HEK293T (cell line): ENCODE measurements at regions of chr19 and their contacts with region 1.

Region 1: DNA sequence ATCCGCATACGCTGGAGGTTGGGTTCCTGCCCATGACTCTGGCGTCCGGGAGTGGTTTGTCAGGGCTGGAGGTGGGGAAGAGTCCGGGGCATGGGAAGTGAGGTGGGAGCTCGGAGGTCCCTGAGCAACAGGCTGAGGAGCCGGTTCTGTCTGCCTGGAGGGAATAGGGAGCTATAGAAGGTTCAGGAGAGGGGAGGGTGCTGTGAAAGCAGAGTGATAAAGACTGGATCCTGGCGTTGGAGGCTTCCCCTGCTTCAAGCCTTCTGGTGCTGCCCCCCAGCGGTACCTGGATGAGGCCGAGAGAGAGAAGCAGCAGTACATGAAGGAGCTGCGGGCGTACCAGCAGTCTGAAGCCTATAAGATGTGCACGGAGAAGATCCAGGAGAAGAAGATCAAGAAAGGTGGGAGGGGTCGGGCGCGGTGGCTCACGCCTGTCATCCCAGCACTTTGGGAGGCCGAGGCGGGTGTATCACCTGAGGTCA is 2.6 kb downstream of the HMG20B start:
- DNase-seq: peak; percentile 41

Region 2: DNA sequence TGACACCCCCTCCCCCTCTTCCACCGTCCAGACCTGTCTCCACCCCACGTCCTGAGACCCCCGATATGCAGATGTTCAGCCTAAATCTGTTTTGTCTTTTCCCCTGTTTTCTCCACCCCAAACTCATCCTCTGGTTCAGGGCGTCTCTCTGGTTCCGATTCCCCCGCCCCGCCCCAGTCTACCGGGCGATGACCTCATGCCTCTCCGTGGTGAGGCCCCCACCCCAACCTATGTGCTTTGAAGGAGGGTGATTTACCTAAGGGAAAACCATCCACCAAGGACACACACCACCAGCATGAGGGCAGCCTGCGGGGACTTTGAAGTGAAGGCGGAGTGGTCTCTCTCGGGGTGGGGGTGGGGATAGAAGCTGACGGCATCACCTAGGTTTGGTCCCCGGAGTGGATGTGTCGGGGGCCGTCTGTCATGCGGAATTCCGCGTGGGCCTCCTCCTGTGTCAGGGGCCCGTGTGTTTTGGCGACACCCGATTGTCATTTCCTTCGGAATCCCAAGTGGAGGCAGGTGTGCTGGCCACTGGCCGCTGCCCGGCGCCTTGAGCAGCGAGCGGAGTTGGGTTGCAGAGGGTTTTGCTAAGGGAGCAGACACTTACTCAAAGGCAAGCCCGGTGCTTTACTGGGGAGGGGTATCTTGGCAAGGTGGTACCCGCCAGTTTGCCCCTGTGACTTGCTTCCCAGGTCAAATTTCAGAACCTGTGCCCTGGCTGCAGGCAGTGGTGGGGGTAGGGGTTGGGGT is 67.8 kb before region 1 on chr19:
- CTCF ChIA-PET with region 1: no interaction called
- POLR2A ChIA-PET with region 1: no interaction called
- DNase-seq: no peak

Region 3: GRCh38 chr19:3544742-3545668 is 30.3 kb before region 1 on chr19:
- CTCF ChIA-PET with region 1: interaction called, 10 read pairs
- POLR2A ChIA-PET with region 1: interaction called, 5 read pairs
- DNase-seq: peak; percentile 89

Region 4: DNA sequence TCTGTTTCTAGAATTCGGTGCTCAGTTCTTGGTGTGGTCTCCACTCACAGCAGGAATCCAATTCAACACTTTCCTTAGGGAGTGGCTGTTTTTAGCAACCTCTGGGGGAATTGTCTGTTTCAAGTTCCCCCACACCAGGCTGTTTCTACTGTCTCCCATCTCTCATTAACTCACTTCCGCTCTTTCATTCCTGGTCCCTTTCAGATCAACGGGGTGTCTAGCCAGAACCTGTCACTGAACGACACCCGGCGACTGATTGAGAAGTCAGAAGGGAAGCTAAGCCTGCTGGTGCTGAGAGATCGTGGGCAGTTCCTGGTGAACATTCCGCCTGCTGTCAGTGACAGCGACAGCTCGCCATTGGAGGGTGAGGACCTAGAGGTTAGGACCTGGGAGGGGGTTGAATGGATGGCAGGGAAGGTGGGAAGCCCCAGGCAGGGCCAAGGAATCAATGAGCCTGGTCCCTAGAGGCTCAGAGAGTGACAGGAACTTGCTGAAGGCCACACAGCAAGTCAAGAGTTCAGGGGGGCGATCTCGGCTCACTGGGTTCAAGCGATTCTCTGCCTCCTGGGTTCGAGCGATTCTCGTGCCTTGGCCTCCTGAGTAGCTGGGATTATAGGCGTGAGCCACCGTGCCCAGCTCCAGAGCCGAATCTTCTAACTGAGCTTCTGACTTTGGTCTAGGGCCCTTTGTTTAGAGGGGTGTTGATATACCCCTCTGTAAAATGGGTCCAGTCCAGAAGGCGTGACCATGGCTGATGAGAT is 158.4 kb after region 1 on chr19:
- CTCF ChIA-PET with region 1: no interaction called
- POLR2A ChIA-PET with region 1: no interaction called
- DNase-seq: no peak